ENCODE measurements at regions of chr6 and their contacts with region 1.

Region 1: DNA sequence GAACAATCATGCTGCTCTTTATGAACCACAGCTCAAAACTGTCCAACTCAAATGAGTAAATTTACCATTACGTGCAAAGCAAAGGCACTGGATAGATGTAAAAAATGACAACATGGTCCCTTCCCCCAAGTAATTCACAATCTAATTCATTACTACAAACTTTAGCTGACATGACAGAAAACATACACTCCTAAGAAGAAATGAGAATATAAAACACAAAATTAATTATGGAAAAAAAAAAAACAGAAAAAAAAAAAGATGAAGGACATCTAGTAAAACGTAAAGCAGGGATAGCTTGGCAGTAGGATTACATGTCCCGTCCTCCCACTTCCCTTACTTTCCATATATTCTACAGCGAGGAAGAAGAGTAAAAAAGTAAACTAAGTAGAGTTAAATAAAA is 5.7 kb downstream of the TUBE1 start:
- DNase-seq: no peak
- ATAC-seq: no peak
- H3K4me3 ChIP-seq: no peak overlapping the region
- H3K27ac ChIP-seq: no peak overlapping the region
- H3K4me1 ChIP-seq: peaks cover 0 to 22% (median 15%) of the 10 kb centered on the region in 9 donors
- H3K27me3 ChIP-seq: no peaks in the 10 kb centered on the region
- CTCF ChIP-seq: no peak

Region 2: GRCh38 chr6:112149719-112150263 is 68.2 kb after region 1 on chr6:
- intact Hi-C with region 1: loop called in 1 of 10 experiments (anchors 5 kb)
- DNase-seq: no peak
- ATAC-seq: peak; percentile 54 to 80 (median 70)
- H3K4me3 ChIP-seq: no peak overlapping the region
- H3K27ac ChIP-seq: peak overlapping the region in 8 of 10 donors; percentile 16 to 67 (median 39)
- H3K4me1 ChIP-seq: peaks cover 0 to 28% (median 4%) of the 10 kb centered on the region in 9 donors
- H3K27me3 ChIP-seq: no peaks in the 10 kb centered on the region
- CTCF ChIP-seq: no peak